GM23248 (cell line): ENCODE measurements at regions of chr14 and their contacts with region 1.

Region 1: GRCh38 chr14:38208618-38209562 is 1.2 kb downstream of the SSTR1 start:
- DNase-seq: peak; percentile 90
- H3K4me3 ChIP-seq: peak overlapping the region; percentile 89
- H3K27ac ChIP-seq: peak overlapping the region; percentile 63
- H3K4me1 ChIP-seq: peaks cover 40% of the 10 kb centered on the region
- H3K27me3 ChIP-seq: no peaks in the 10 kb centered on the region

Region 2: DNA sequence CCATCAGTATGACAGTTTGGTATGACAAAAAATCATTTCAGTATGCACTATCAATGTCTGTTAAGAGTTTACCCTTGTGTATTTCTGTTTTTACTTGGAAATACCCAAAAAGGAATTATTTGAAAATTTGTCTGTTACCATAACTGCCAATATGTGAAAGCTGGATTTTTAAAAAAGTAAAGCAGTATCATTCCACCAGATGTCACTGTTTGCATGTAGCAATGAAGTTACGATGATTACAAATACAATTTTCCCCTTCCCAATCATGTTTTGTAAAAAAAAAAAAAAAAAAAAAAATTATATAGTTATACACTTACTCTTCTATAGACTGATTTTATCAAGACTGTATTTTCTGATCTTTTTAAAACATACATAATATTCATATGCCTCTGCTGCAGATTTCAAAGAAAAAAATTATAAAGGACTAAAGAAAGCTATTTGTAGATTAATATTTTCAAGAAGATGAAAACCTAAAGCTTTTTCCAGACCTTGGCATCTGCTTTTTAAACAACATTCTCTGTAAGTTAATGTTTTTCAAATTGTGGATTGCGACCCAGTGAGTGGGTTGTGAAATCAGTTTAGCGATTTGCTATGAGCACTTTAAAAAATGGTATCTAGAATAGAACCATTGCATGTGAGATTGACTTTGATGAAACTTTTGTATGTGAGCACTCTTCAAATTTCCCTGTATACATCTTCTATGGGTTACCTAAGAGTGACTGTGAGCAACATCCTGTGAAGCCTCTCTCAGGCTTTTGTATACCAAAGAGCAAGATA is 499.3 kb before region 1 on chr14:
- in situ Hi-C with region 1: loop called (anchors 25 kb)
- DNase-seq: peak; percentile 51
- H3K4me3 ChIP-seq: no peak overlapping the region
- H3K27ac ChIP-seq: no peak overlapping the region
- H3K4me1 ChIP-seq: peaks cover 10% of the 10 kb centered on the region
- H3K27me3 ChIP-seq: no peaks in the 10 kb centered on the region

Region 3: GRCh38 chr14:38357557-38357956 is 148.7 kb after region 1 on chr14:
- in situ Hi-C with region 1: no loop called
- DNase-seq: peak; percentile 88
- H3K4me3 ChIP-seq: no peak overlapping the region
- H3K27ac ChIP-seq: peak overlapping the region; percentile 16
- H3K4me1 ChIP-seq: peaks cover 15% of the 10 kb centered on the region
- H3K27me3 ChIP-seq: no peaks in the 10 kb centered on the region

Region 4: DNA sequence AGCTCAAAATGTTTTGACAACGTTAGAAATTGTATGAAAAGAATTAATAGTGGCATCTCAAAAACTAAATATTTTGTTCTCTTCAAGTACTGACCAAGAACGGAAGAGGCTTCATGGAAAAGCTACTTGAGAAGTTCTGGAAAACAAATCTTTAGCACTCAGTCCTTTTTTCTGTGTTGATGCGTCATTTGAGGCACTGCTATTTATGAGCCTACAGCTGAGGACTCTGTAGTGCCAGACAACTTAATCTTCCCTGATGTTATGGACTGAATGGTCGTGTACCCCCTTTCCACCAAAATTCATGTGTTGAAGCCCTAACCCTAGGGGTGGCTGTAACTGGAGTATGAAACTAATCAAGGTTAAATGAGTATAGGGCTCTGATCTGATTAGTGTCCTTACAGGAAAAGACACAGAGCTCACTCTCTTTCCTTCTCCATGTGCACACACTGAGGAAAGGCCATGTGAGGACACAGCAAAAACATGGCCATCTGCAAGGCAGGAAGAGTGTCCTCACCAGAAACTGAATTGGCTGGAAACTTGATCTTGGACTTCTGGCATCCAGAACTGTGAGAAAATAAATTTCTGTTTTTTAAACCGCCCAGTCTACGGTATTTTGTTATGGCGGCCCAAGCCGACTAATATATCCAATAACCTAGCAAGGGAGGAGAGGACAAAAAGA is 384.0 kb after region 1 on chr14:
- in situ Hi-C with region 1: loop called (anchors 10 kb)
- DNase-seq: peak; percentile 25
- H3K4me3 ChIP-seq: no peak overlapping the region
- H3K27ac ChIP-seq: no peak overlapping the region
- H3K4me1 ChIP-seq: peaks cover 12% of the 10 kb centered on the region
- H3K27me3 ChIP-seq: no peaks in the 10 kb centered on the region

Region 5: DNA sequence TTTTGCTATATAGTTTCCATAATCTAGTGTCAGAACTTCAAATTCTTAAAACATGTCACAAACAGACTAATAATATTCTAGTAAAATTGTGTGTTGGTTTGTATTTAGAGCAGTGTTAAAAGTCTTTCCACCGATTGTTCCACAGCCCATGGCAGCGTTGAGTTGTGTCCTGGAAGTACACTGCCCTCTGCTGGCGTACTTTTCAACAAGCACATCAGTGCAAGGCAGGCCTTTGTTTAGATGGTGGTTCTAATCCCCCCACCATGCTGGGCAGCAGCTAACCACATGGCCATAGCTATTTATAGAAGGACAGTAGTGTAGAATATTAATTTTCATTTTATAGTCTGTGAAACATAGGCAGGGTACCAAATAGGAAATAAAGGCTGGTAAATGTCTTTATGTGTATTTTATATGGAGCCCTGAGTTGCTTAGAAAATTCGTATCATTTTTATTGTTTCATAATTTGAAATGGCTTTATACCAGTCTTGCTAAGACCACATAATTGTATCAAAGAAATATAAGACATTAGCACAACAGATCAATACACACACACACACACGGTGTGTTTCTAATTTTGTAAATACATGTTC is 658.8 kb after region 1 on chr14:
- in situ Hi-C with region 1: loop called (anchors 25 kb)
- DNase-seq: peak; percentile 84
- H3K4me3 ChIP-seq: no peak overlapping the region
- H3K27ac ChIP-seq: no peak overlapping the region
- H3K4me1 ChIP-seq: no peaks in the 10 kb centered on the region
- H3K27me3 ChIP-seq: no peaks in the 10 kb centered on the region